ENCODE measurements at regions of chr2 and their contacts with region 1.

Region 1: DNA sequence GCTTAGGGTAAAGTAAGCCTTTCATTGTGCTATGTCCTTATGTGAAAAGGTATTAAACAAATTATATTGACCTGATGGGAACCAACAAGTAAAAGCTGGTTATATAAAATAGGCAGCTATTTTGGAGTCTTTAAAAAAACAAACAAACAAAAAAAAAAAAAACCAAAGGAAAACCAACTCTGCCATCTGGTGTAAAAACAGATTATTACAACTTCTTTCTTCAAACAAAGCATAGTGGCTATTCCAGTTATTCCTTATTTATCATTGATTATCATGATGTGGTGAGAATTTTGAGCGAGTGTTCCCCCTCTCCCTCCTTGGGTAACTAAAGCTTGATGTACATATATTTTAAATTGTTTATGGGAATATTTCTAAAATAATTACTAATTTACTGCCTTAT is 122.4 kb upstream of the FHL2 start:
- DNase-seq: no peak
- CTCF ChIP-seq: peak; percentile 15

Region 2: GRCh38 chr2:105344704-105345345 is 176.4 kb before region 1 on chr2:
- CTCF ChIA-PET with region 1: interaction called, 12 read pairs
- POLR2A ChIA-PET with region 1: no interaction called
- DNase-seq: no peak
- CTCF ChIP-seq: peak; percentile 36

Region 3: GRCh38 chr2:105369747-105370690 is 151.2 kb before region 1 on chr2:
- CTCF ChIA-PET with region 1: interaction called, 56 read pairs
- POLR2A ChIA-PET with region 1: no interaction called
- DNase-seq: peak; percentile 81
- CTCF ChIP-seq: peak; percentile 95

Region 4: GRCh38 chr2:105377819-105378218 is 143.4 kb before region 1 on chr2:
- CTCF ChIA-PET with region 1: interaction called, 11 read pairs
- POLR2A ChIA-PET with region 1: no interaction called
- DNase-seq: no peak
- CTCF ChIP-seq: no peak

Region 5: GRCh38 chr2:105490204-105490603 is 31.0 kb before region 1 on chr2:
- CTCF ChIA-PET with region 1: no interaction called
- POLR2A ChIA-PET with region 1: no interaction called
- DNase-seq: no peak
- CTCF ChIP-seq: no peak

Measured in GM10248 (cell line).